ENCODE measurements at regions of chr20 and their contacts with region 1.

Region 1: DNA sequence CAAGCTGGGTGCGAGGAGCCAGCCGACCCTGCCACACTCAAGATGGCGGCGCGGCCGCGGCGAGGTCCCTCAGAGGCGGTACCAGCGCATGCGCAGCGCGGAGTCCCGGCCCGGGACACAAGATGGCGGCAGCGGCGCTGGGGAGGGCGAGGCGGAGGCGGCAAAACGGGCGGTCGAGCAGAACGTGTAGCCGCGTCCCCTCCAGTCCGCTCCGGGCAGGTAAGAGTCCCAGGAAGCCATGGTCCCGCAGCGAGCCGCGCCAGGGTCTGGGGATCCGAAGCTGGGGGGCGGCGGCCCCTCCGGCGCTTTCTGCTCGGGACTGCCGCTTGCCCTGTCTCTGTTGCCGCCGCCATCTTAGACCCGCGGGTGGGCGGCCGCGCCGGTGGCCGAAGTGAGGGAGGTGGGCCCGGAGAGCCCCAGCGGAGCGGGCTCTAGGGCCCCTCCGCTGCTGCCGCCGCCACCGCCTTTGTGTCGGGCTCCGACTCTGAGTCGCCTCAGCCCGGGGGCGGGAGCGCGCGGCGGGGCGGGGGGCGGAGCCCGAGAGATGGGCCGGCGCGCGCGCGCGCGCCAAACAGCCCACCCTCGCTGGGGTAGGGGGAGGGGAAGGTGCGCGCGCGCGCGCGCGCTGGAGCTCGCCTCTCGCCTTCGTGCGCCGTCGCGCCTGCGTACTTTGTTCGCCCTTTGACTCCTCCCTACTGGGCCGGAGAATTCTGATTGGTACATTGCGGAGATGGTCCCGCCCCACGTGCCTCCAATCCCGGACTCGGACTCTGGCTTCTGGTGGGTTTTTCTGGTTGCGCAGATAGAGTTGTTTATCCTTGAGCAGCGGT is at the start of gene PCIF1:
- H3K4me3 ChIP-seq: peak within 1 kb of the TSS; percentile 96
- H3K27ac ChIP-seq: peak within 1 kb of the TSS; percentile 98
- H3K4me1 ChIP-seq: peaks cover 9% of the 10 kb centered on the region
- CTCF ChIP-seq: no peak; the same call in 1 of the 2 replicates

Region 2: GRCh38 chr20:45798935-45799642 is 135.7 kb before region 1 on chr20:
- CTCF ChIA-PET with region 1: interaction called, 10 read pairs
- POLR2A ChIA-PET with region 1: interaction called, 9 read pairs
- H3K4me3 ChIP-seq: no peak overlapping the region
- H3K27ac ChIP-seq: no peak overlapping the region
- H3K4me1 ChIP-seq: no peaks in the 10 kb centered on the region
- CTCF ChIP-seq: peak; percentile 82

Region 3: GRCh38 chr20:45867819-45868176 is 67.0 kb before region 1 on chr20:
- CTCF ChIA-PET with region 1: no interaction called
- POLR2A ChIA-PET with region 1: no interaction called
- H3K4me3 ChIP-seq: no peak overlapping the region
- H3K27ac ChIP-seq: no peak overlapping the region
- H3K4me1 ChIP-seq: no peaks in the 10 kb centered on the region
- CTCF ChIP-seq: no peak

Region 4: GRCh38 chr20:45880988-45881788 is 53.6 kb before region 1 on chr20 and contains the start of gene ZSWIM1:
- CTCF ChIA-PET with region 1: interaction called, 3 read pairs
- POLR2A ChIA-PET with region 1: interaction called, 26 read pairs
- H3K4me3 ChIP-seq: peak within 1 kb of the TSS; percentile 53
- H3K27ac ChIP-seq: peak within 1 kb of the TSS; percentile 62
- H3K4me1 ChIP-seq: no peaks in the 10 kb centered on the region
- CTCF ChIP-seq: no peak

Region 5: GRCh38 chr20:45905505-45906079 is 29.2 kb before region 1 on chr20:
- CTCF ChIA-PET with region 1: interaction called, 3 read pairs
- POLR2A ChIA-PET with region 1: interaction called, 26 read pairs
- H3K4me3 ChIP-seq: no peak overlapping the region
- H3K27ac ChIP-seq: no peak overlapping the region
- H3K4me1 ChIP-seq: no peaks in the 10 kb centered on the region
- CTCF ChIP-seq: no peak

Region 6: DNA sequence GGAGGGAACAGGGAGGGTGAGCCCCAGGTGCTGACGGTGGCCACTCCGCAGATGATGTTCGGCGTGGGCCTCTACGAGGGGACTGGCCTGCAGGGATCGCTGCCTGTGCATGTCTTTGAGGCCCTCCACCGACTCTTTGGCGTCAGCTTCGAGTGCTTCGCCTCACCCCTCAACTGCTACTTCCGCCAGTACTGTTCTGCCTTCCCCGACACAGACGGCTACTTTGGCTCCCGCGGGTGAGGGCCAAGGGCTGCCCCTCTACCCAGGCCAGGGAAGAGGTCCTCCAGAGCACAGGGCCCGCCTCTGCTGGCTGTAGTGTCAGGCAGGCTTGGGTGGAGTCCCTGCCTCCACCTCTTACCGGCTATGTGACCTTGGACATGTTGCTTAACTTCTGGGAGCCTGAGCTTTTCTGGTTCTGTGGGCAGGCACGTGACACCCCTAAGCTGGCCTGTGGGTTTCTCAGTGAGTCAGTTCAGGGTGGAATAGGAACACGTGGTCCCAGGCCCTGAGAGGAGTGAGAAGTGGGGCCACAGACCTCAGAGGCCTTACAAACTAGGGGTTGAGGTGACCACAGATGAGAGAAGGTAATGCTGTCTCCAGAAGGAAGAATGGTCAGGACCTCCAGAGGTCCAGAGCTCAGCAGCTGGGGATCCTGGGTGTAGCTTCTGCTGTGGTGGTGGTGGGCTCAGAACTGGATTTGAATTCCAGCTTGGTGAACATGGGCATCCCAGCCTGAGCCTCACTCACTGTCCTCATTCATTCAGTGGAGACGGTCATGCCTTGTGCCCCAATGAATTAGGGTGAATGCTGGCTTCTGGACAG is 11.6 kb after region 1 on chr20:
- CTCF ChIA-PET with region 1: no interaction called
- POLR2A ChIA-PET with region 1: interaction called, 28 read pairs
- H3K4me3 ChIP-seq: no peak overlapping the region
- H3K27ac ChIP-seq: no peak overlapping the region
- H3K4me1 ChIP-seq: no peaks in the 10 kb centered on the region
- CTCF ChIP-seq: no peak

Region 7: DNA sequence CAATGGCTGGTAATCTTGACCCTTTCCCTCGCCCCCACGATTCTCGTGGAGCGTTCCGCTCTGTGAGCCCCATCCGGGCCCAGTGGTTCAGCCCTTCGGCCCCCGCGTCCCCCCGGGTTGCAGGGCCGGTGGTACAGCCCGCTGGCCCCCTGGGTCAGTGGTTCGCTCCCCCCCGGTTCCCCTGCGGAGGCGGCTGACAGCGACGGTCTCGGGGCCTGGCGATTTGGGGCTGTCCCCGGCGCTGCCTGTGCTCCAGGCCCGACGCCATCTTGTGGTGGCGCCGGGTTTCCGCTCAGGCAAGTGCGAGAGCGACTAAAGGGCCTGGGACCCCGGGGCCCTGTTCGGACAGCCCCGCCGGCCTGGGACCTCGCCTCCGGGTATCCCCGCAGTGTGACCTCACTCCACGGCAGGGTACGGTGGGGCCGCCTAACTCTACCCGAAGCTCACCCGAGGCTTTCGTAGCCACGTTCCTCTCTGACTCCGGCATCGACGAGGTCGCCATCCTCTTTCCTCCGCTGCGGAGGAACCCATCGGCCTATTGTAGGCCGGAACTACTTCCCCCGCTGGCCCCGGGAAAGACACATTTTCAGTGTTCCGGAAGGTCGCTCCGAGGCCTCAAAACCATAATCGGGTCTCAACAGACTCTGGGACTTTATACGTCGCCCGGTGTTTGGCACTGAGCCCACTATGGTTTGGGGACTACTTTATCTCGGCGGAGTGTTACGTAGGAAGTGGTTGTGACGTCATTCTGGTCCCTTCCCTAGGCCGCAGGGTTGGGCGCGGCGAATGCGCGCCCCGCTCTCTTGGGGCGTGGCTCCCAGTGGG is 37.1 kb after region 1 on chr20 and contains the start of gene ZNF335:
- CTCF ChIA-PET with region 1: interaction called, 18 read pairs
- POLR2A ChIA-PET with region 1: interaction called, 7 read pairs
- H3K4me3 ChIP-seq: peak within 1 kb of the TSS; percentile 90
- H3K27ac ChIP-seq: peak within 1 kb of the TSS; percentile 92
- H3K4me1 ChIP-seq: no peaks in the 10 kb centered on the region
- CTCF ChIP-seq: peak; percentile 44; the same call in 1 of the 2 replicates

Region 8: DNA sequence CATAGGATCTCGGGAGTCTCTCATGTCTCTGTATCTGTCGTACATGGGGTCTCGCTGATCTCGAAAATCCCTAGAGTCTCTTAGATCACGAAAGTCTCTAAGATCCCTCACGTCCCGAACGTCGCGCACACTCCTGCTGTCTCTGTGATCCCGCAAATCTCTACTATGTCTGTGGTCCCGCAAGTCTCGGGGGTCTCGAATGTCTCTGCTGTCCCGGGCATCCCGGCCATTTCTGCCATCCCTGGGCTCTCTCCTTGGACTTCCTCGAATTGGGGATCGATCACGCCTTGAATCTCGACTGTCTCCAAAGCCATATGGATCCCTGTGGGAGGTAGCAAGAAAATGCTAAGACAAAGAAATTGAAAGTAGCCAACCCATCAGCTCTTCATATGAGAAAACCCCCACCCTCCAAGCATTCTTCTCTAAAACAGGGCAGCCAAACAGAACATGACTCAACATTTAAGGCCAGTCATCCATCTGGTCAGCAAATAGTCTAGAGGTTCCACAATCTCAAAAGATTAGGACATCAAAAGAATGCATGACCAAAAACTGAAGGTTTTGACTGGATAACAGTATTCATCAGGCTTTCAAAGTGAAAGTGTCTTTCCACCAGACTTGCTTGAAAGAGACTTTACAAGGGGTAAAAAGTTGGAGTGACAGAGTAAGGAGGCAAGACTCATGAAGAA is 135.6 kb after region 1 on chr20:
- CTCF ChIA-PET with region 1: no interaction called
- POLR2A ChIA-PET with region 1: no interaction called
- H3K4me3 ChIP-seq: no peak overlapping the region
- H3K27ac ChIP-seq: no peak overlapping the region
- H3K4me1 ChIP-seq: peaks cover 6% of the 10 kb centered on the region; the same call in 1 of the 2 replicates
- CTCF ChIP-seq: no peak